Sciatic nerve (tissue), 2 donors: ENCODE measurements at regions of chr12 and their contacts with region 1.

Region 1: DNA sequence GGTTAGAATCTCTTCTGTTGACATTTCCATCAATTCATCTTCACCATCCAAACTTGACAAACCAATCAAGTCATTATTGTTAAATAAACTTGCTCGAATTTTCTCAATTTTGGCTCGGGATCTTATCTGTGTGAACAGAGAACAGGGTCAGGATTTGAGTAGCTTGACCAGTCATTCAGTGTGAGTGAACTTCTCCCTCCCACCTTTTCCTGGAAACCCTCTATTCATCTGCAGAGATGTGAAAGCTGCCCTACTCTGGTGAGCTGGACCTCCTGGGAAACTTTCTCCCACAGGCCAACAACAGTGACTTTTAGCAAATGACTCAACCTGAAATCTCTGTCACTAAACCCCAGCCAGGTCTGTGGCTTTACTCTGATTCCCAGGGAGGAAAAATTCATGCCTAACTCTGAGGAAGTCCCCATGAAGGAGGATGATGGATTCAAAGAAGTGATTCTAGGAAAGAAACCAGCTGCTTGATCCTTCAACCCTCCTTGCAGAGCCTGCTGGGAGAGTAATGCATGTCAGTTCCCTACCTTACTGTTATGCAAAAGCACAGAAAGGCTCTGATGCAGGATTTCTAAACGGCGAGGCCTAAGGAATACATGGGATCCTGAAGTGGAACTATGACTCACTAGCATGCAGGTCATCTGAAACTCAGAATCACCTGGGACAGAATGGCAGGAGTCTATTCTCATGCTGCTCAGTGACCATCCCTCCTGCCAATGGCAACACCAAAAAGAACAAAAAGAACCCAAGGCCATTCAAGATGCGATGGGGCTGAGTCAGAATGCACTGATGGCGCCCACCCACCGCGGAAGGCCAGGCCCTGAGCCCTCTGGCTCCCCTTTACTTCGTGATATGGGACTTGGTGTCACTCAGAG is 58.0 kb downstream of the TRAFD1 start:
- DNase-seq: no peak
- ATAC-seq: peak; percentile 22

Region 2: DNA sequence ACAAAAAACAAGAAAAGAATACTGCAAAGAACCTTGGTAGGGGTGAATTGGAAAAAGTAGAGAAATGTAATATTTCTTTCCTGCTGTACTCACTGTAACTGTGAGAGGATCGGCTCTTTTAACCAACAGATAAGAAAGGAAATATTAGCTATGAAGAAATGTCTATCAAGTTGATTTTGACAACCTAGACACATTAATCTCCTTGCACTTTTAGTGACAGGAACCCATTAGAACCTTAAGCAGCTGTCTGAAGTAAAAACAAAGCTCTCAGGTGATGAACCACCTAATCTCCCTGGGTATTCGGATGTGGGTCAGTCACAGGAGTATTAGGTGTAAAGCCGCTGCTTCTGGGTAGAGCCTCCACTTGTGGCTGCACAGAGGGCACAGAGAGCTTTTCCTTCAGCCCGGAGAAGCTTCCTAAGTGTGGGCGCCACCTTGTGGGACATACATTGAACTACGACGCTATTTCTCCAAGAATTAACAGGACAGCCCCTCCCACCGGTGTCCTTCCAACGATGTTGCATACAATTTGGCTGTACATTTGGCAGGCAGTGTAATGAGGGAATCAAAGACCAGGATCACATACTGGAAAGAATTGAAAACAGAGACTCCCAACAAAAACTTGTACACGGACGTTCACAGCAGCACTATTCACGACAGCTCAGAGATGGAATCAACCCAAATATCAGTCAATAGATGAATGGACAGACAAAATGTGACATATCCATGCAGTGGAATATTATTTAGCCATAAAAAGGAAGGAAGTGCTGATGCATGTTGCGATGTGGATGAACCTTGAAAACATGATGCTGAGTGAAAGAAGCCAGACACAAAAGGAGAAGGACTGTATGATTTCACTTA is 370.3 kb before region 1 on chr12:
- intact Hi-C with region 1: no loop called
- DNase-seq: peak; percentile 83
- ATAC-seq: peak; percentile 94

Region 3: GRCh38 chr12:112125250-112125999 is 58.0 kb before region 1 on chr12 and contains the start of gene TRAFD1:
- intact Hi-C with region 1: loop called (anchors 10 kb)
- DNase-seq: peak; percentile 99
- ATAC-seq: peak; percentile 100
- total RNA-seq, gene TRAFD1: 26.5 TPM

Region 4: DNA sequence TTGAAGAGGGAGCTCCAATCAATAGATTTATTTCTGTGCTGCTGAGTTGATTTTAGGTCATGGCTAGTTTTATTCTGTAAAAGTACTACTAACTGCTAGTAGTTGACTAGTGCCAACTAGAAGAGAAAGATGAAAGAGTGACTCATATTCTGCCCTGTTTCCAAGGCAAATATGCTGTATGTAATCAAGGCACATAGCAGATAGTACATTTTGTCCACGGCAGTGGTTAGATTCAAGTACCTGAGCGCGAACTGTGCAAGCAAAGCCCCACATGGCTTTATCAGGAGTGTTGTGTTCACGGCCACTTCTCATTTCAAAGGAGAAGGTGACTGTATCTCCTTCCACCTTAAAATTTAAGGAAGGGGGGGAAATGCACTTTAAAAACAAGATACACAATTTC is 68.8 kb after region 1 on chr12:
- intact Hi-C with region 1: no loop called
- DNase-seq: no peak
- ATAC-seq: no peak